Activated CD4-positive, alpha-beta memory T cell treated with anti-CD3 and anti-CD28 coated beads for 36 hours (primary cell): ENCODE measurements at regions of chr1 and their contacts with region 1.

Region 1: GRCh38 chr1:223133824-223134435 is 9.1 kb downstream of the TLR5 start:
- DNase-seq: peak; percentile 85
- H3K4me3 Mint-ChIP-seq: peak overlapping the region; percentile 16
- H3K27ac Mint-ChIP-seq: no peak overlapping the region
- H3K4me1 Mint-ChIP-seq: peaks cover 14% of the 10 kb centered on the region
- H3K27me3 Mint-ChIP-seq: peaks cover 12% of the 10 kb centered on the region

Region 2: DNA sequence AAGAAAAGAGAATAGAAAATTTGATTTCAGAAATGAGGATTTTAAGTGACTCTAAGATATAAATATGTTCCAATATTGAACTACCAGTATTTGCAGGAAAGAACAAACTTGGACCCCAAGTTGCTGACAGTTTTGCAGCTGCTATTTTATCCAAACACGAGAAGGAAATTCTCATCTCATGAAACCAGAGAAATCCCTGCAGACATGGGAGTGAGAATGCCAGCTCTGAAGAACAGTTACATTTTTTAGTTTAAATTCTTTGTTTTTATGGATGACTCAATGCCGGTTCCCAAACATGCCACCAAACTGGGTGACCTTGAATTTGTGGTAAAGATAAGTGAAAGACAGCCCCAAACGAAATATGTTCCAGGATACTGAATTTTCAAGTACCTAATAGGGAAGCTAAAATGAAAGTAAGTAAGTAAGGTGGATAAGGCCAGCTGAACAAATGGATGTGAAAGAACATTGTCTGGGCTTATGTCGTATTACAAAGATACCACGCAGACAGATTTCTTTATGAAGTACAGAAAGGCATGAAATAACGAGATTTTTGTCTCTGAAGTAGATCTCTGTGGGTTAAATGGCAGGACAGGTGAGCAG is 10.8 kb before region 1 on chr1:
- CTCF ChIA-PET with region 1: interaction called, 122 read pairs
- POLR2A ChIA-PET with region 1: interaction called, 3 read pairs
- intact Hi-C with region 1: no loop called
- DNase-seq: no peak
- H3K4me3 Mint-ChIP-seq: peak overlapping the region; percentile 11
- H3K27ac Mint-ChIP-seq: no peak overlapping the region
- H3K4me1 Mint-ChIP-seq: peaks cover 8% of the 10 kb centered on the region
- H3K27me3 Mint-ChIP-seq: no peaks in the 10 kb centered on the region

Region 3: GRCh38 chr1:223244366-223245103 is 110.6 kb after region 1 on chr1:
- CTCF ChIA-PET with region 1: interaction called, 13 read pairs
- POLR2A ChIA-PET with region 1: no interaction called
- intact Hi-C with region 1: loop called (anchors 1 kb)
- DNase-seq: peak; percentile 52
- H3K4me3 Mint-ChIP-seq: no peak overlapping the region
- H3K27ac Mint-ChIP-seq: peak overlapping the region; percentile 59
- H3K4me1 Mint-ChIP-seq: peaks cover 31% of the 10 kb centered on the region
- H3K27me3 Mint-ChIP-seq: no peaks in the 10 kb centered on the region

Region 4: DNA sequence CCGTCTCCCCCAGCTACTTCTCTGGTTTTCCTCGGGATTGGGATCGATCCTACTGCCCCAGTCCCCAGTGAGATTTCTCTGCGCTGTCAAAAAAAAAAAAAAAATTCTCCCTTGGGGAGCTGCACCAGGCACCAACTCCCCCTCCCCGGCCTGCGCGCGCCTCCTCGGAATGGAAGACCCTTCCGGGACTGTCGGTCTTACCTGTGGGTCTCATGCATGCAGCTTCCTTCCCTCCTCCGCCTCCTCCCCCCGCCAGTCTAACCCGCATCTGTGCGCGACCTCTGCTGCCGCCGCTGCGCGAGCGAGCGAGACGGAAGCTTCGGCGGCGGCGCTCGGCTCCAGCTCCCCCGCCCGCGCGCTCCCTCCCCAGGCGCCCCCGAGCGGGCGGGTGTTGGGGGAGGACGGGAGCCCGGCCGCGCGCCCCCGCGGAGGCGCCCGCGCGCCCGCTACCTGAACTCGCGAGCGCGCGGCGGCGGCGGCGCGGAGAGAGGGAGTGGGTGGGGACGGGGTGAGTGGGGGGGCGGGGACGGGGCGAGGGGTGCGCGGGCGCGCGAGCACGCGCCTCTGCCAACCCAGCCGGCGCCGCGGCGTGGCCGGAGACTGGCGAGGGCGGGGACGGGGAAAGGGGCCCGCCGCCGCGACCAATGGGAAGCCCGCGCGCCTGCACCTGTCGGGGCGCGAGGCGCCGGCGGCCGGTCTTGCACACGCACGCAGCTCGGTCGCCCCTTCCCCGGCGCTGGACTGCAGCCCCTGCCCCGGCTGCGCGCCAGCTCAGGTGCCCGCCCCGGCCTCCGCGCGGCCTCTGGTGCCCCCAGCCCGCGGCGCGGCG is 230.1 kb after region 1 on chr1 and contains the start of gene SUSD4:
- CTCF ChIA-PET with region 1: interaction called, 17 read pairs
- POLR2A ChIA-PET with region 1: no interaction called
- intact Hi-C with region 1: no loop called
- DNase-seq: peak; percentile 74
- H3K4me3 Mint-ChIP-seq: peak within 1 kb of the TSS; percentile 81
- H3K27ac Mint-ChIP-seq: no peak within 1 kb of the TSS
- H3K4me1 Mint-ChIP-seq: peaks cover 13% of the 10 kb centered on the region
- H3K27me3 Mint-ChIP-seq: peaks cover 12% of the 10 kb centered on the region
- total RNA-seq, gene SUSD4: 0.82 to 0.83 TPM

Region 5: DNA sequence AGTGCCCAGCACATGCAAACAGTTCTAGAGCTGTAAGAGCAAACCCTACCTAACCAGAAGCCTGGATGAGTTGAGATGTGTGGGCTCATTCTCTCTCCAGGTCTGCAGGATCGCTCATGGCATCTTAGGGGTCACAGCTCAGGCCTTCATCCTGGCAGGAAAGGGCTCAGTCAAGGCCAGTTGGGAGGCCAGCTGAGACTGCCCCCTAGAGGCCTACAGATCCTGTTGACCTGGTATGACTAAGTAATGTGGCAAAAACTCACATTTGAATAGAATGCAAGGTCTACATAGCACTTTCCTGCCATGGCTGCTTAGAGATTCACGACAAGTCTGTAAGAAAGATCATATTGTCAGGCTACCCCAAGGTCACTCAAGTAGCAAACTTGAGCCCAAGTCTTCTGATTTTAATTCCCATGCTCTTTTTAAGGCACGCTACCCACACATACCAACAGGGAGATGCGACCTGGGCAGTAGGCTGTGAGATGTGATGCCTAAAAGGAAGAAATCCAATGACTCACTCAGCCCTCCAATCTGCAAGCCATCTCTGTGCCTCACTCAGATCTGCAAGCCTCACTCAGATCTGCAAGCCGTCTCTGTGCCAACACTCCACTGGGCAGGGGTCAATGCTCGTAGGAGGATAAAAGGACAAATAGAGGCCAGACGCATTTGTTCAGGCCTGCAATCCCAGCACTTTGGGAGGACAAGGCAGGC is 536.7 kb after region 1 on chr1:
- CTCF ChIA-PET with region 1: interaction called, 11 read pairs
- POLR2A ChIA-PET with region 1: no interaction called
- intact Hi-C with region 1: no loop called
- DNase-seq: peak; percentile 38
- H3K4me3 Mint-ChIP-seq: no peak overlapping the region
- H3K27ac Mint-ChIP-seq: no peak overlapping the region
- H3K4me1 Mint-ChIP-seq: no peaks in the 10 kb centered on the region
- H3K27me3 Mint-ChIP-seq: no peaks in the 10 kb centered on the region